Activated CD4-positive, alpha-beta memory T cell treated with anti-CD3 and anti-CD28 coated beads for 36 hours (primary cell): ENCODE measurements at regions of chr5 and their contacts with region 1.

Region 1: GRCh38 chr5:112174959-112175594 is 244.0 kb downstream of the EPB41L4A start:
- DNase-seq: peak; percentile 33
- H3K4me3 Mint-ChIP-seq: no peak overlapping the region
- H3K27ac Mint-ChIP-seq: no peak overlapping the region
- H3K4me1 Mint-ChIP-seq: peaks cover 2% of the 10 kb centered on the region
- H3K27me3 Mint-ChIP-seq: peaks cover 10% of the 10 kb centered on the region

Region 2: GRCh38 chr5:112186401-112186990 is 11.4 kb after region 1 on chr5:
- CTCF ChIA-PET with region 1: interaction called, 11 read pairs
- POLR2A ChIA-PET with region 1: no interaction called
- intact Hi-C with region 1: loop called (anchors 1 kb)
- DNase-seq: no peak
- H3K4me3 Mint-ChIP-seq: no peak overlapping the region
- H3K27ac Mint-ChIP-seq: no peak overlapping the region
- H3K4me1 Mint-ChIP-seq: peaks cover 9% of the 10 kb centered on the region
- H3K27me3 Mint-ChIP-seq: peaks cover 38% of the 10 kb centered on the region

Region 3: GRCh38 chr5:112217843-112218579 is 42.9 kb after region 1 on chr5:
- CTCF ChIA-PET with region 1: no interaction called
- POLR2A ChIA-PET with region 1: no interaction called
- intact Hi-C with region 1: no loop called
- DNase-seq: no peak
- H3K4me3 Mint-ChIP-seq: no peak overlapping the region
- H3K27ac Mint-ChIP-seq: no peak overlapping the region
- H3K4me1 Mint-ChIP-seq: no peaks in the 10 kb centered on the region
- H3K27me3 Mint-ChIP-seq: peaks cover 3% of the 10 kb centered on the region

Region 4: GRCh38 chr5:112757468-112758208 is 582.6 kb after region 1 on chr5:
- CTCF ChIA-PET with region 1: interaction called, 11 read pairs
- POLR2A ChIA-PET with region 1: no interaction called
- intact Hi-C with region 1: loop called (anchors 2 kb)
- DNase-seq: no peak
- H3K4me3 Mint-ChIP-seq: no peak overlapping the region
- H3K27ac Mint-ChIP-seq: no peak overlapping the region
- H3K4me1 Mint-ChIP-seq: no peaks in the 10 kb centered on the region
- H3K27me3 Mint-ChIP-seq: no peaks in the 10 kb centered on the region